CD8-positive, alpha-beta T cell (primary cell): ENCODE measurements at regions of chr7 and their contacts with region 1.

Region 1: GRCh38 chr7:23273141-23273599 is 26.0 kb upstream of the MALSU1 start:
- DNase-seq: peak; percentile 78 to 91 (median 89)
- ATAC-seq: peak; percentile 97
- H3K4me3 ChIP-seq: peak overlapping the region in 1 of 2 experiments; percentile 16
- H3K4me3 Mint-ChIP-seq: peak overlapping the region; percentile 70
- H3K27ac ChIP-seq: no peak overlapping the region
- H3K27ac Mint-ChIP-seq: no peak overlapping the region
- H3K4me1 ChIP-seq: no peaks in the 10 kb centered on the region
- H3K4me1 Mint-ChIP-seq: peaks cover 4% of the 10 kb centered on the region
- H3K27me3 ChIP-seq: no peaks in the 10 kb centered on the region
- H3K27me3 Mint-ChIP-seq: peaks cover 6% of the 10 kb centered on the region
- CTCF ChIP-seq: peak; percentile 82

Region 2: GRCh38 chr7:23261843-23262452 is 11.2 kb before region 1 on chr7:
- CTCF ChIA-PET with region 1: interaction called, 64 read pairs
- POLR2A ChIA-PET with region 1: interaction called, 3 read pairs
- intact Hi-C with region 1: no loop called
- DNase-seq: peak; percentile 19 to 74 (median 54)
- ATAC-seq: peak; percentile 97
- H3K4me3 ChIP-seq: no peak overlapping the region
- H3K4me3 Mint-ChIP-seq: no peak overlapping the region
- H3K27ac ChIP-seq: no peak overlapping the region
- H3K27ac Mint-ChIP-seq: no peak overlapping the region
- H3K4me1 ChIP-seq: no peaks in the 10 kb centered on the region
- H3K4me1 Mint-ChIP-seq: no peaks in the 10 kb centered on the region
- H3K27me3 ChIP-seq: no peaks in the 10 kb centered on the region
- H3K27me3 Mint-ChIP-seq: peaks cover 10% of the 10 kb centered on the region
- CTCF ChIP-seq: peak; percentile 78

Region 3: DNA sequence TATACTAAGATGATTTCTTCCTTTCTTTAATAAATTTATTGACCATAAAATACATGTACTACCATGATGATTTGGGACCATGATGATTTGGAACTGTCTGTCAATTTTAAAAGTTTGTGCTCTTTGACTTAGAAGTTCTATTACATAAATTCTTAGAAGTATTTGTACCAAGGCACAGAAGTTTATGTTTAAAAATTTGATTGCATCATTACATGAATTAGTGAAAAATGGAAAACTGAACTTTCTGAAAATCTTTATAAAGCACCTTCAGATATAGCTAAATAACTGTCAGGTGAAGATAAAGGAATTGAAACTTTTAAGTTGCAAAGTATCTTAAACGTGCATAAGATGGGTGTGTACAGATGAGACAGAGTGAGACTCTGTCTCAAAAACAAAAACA is 58.0 kb after region 1 on chr7:
- CTCF ChIA-PET with region 1: interaction called, 10 read pairs
- POLR2A ChIA-PET with region 1: no interaction called
- intact Hi-C with region 1: no loop called
- DNase-seq: no peak
- ATAC-seq: no peak
- H3K4me3 ChIP-seq: no peak overlapping the region
- H3K4me3 Mint-ChIP-seq: no peak overlapping the region
- H3K27ac ChIP-seq: no peak overlapping the region
- H3K27ac Mint-ChIP-seq: no peak overlapping the region
- H3K4me1 ChIP-seq: no peaks in the 10 kb centered on the region
- H3K4me1 Mint-ChIP-seq: no peaks in the 10 kb centered on the region
- H3K27me3 ChIP-seq: no peaks in the 10 kb centered on the region
- H3K27me3 Mint-ChIP-seq: peaks cover 3% of the 10 kb centered on the region
- CTCF ChIP-seq: no peak

Region 4: DNA sequence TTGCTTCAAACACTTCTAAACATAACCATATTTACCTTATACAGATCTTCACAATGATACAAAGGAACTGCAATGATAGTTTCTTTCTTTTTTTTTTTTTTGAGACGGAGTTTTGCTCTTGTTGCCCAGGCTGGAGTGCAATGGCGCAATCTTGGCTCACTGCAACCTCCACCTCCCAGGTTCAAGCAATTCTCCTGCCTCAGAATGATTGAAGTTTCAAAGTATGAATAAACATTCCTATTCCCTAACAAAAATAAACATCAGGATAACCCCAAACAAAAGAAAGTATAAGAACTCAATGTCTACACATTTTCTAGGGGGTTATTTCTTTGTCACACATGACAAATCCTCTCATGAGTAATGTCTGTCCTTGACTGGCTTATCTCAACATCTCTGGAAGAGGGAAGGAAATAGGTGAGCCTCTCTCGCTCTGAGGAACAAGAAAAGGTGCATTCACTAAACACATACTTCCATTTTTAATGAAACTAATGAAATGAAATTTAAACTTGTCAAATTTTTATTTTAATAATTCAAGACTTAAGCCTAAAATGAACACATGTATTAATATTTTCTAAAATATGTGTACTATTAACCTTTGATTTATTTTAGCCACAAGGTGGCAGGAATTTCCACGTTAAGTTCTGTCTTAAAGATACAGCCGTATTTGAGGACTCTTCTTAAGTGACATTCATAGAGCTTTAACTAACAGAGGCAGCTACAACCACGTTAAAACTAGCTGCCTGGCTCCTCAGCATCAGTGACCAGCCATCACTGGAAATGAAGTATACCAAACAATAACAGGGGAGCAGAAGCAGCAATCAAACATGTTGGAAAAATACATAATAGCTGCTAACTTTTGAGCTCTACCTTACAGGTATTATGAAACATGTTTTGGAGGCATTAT is 84.3 kb after region 1 on chr7:
- CTCF ChIA-PET with region 1: interaction called, 27 read pairs
- POLR2A ChIA-PET with region 1: no interaction called
- intact Hi-C with region 1: loop called (anchors 2 to 5 kb)
- DNase-seq: peak in 2 of 9 experiments; percentile 26 to 51
- ATAC-seq: peak; percentile 36
- H3K4me3 ChIP-seq: no peak overlapping the region
- H3K4me3 Mint-ChIP-seq: no peak overlapping the region
- H3K27ac ChIP-seq: no peak overlapping the region
- H3K27ac Mint-ChIP-seq: no peak overlapping the region
- H3K4me1 ChIP-seq: peaks cover 4% of the 10 kb centered on the region
- H3K4me1 Mint-ChIP-seq: peaks cover 12% of the 10 kb centered on the region
- H3K27me3 ChIP-seq: peaks cover 0 to 8% of the 10 kb centered on the region in 2 experiments
- H3K27me3 Mint-ChIP-seq: peaks cover 12% of the 10 kb centered on the region
- CTCF ChIP-seq: peak; percentile 50

Region 5: GRCh38 chr7:23712368-23713284 is 439.5 kb after region 1 on chr7:
- CTCF ChIA-PET with region 1: interaction called, 29 read pairs
- POLR2A ChIA-PET with region 1: no interaction called
- intact Hi-C with region 1: loop called (anchors 1 kb)
- DNase-seq: peak in 2 of 9 experiments; percentile 59 to 68
- ATAC-seq: no peak
- H3K4me3 ChIP-seq: no peak overlapping the region
- H3K4me3 Mint-ChIP-seq: no peak overlapping the region
- H3K27ac ChIP-seq: no peak overlapping the region
- H3K27ac Mint-ChIP-seq: no peak overlapping the region
- H3K4me1 ChIP-seq: no peaks in the 10 kb centered on the region
- H3K4me1 Mint-ChIP-seq: no peaks in the 10 kb centered on the region
- H3K27me3 ChIP-seq: no peaks in the 10 kb centered on the region
- H3K27me3 Mint-ChIP-seq: no peaks in the 10 kb centered on the region
- CTCF ChIP-seq: peak; percentile 74